Activated B cell treated with CpG ODN at 0.5 μM for 24 hours (primary cell): ENCODE measurements at regions of chr4 and their contacts with region 1.

Region 1: DNA sequence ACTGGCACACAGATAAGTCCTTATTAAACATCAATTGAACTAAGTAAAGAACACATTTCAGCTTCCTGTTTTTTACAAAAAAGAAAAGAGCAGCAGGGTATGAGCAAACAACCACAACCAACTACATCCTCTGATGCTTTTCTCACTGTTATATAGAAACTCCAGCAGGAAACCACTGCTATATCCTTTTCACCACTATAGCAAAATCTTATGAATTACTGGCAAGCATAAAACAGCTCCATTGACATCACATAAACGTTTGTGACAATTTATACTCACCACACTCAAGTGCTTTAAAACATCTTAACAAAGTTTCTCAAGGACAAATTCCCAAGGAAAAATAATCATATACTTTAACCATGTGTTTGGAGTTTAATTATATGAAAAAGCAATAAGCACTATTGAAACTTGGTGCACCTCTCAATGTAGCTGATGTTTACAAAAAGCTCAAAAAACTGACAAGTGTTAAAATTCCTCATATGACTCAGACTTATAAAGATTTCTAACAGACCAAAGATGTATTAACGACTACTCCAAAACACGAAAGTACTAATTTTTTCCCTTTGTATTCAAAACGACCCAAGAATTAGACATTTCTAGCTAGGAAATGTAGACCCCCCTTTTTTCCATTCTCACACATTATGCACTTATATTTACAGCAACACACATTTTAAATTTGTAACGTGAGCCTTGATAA is 12.9 kb downstream of the GPRIN3 start:
- DNase-seq: no peak
- ATAC-seq: peak; percentile 33
- H3K4me3 Mint-ChIP-seq: no peak overlapping the region
- H3K27ac Mint-ChIP-seq: no peak overlapping the region
- H3K4me1 Mint-ChIP-seq: peaks cover 64% of the 10 kb centered on the region
- H3K27me3 Mint-ChIP-seq: peaks cover 7% of the 10 kb centered on the region
- CTCF ChIP-seq: no peak

Region 2: GRCh38 chr4:89254847-89255246 is 39.9 kb before region 1 on chr4:
- CTCF ChIA-PET with region 1: interaction called, 3 read pairs
- POLR2A ChIA-PET with region 1: no interaction called
- intact Hi-C with region 1: loop called (anchors 2 kb)
- DNase-seq: no peak
- ATAC-seq: peak; percentile 64
- H3K4me3 Mint-ChIP-seq: no peak overlapping the region
- H3K27ac Mint-ChIP-seq: no peak overlapping the region
- H3K4me1 Mint-ChIP-seq: no peaks in the 10 kb centered on the region
- H3K27me3 Mint-ChIP-seq: no peaks in the 10 kb centered on the region
- CTCF ChIP-seq: peak; percentile 88

Region 3: DNA sequence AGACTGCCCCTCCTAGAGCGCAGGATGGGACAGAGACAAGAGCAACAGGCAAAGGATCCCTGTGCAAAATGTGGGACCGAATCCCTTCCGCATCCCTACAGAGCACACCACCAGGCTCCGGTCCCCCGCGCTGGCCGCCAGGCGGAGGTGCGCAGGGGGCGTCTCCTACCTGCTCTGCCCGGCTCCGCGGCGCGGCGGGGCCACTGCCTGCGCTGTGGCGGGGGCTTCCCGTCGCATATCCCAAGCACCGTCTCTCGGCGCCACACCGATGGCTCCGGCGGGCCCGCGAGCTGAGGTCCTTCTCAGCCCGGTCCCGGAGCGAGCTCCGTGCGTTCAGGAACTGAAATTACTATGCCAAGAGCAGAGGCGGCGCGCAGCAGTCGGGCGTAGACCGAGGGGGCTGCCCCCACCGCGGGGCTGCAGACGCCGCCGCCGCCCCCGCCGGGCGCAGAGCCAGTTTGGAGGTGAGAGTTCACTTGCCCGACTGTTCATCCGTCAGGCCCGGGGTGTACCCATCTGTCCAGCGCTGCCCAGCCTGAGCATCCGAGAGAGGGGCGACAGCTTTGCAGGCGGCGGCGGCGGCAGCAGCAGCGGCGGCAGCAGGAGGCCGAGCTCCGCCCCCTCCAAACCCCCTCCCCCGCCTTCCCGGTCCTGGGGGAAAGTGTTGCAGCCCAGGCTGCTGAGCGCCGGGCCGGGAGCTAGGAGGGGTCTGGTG is 12.9 kb after region 1 on chr4 and contains the start of gene GPRIN3:
- CTCF ChIA-PET with region 1: no interaction called
- POLR2A ChIA-PET with region 1: interaction called, 7 read pairs
- intact Hi-C with region 1: loop called (anchors 1 kb)
- DNase-seq: peak; percentile 59
- ATAC-seq: peak; percentile 93
- H3K4me3 Mint-ChIP-seq: peak within 1 kb of the TSS; percentile 88
- H3K27ac Mint-ChIP-seq: peak within 1 kb of the TSS; percentile 46
- H3K4me1 Mint-ChIP-seq: peaks cover 30% of the 10 kb centered on the region
- H3K27me3 Mint-ChIP-seq: peaks cover 10% of the 10 kb centered on the region
- CTCF ChIP-seq: no peak
- total RNA-seq, gene GPRIN3: 1.8 and 1.9 TPM in 2 replicates

Region 4: DNA sequence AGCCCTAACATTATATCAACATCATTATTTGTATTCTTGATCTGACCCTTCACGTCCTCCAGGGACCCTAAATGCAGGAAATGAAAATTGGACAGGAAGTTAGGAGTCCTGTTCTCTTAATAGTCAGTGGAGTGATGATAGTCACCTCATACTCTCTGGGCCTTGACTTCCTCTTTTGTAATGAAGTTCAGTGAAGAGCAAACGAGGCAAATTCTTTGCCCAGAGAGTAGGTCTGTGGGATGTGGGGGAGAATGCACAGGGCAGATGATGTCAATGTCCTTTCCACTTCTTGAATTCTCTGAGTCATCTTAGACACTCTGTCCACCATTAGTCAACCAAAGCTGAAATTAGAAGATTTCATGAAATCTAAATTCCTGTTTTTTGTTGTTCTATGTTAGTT is 29.9 kb after region 1 on chr4:
- CTCF ChIA-PET with region 1: interaction called, 3 read pairs
- POLR2A ChIA-PET with region 1: no interaction called
- intact Hi-C with region 1: loop called (anchors 1 kb)
- DNase-seq: no peak
- ATAC-seq: peak; percentile 98
- H3K4me3 Mint-ChIP-seq: peak overlapping the region; percentile 12
- H3K27ac Mint-ChIP-seq: peak overlapping the region; percentile 66
- H3K4me1 Mint-ChIP-seq: peaks cover 27% of the 10 kb centered on the region
- H3K27me3 Mint-ChIP-seq: no peaks in the 10 kb centered on the region
- CTCF ChIP-seq: no peak

Region 5: GRCh38 chr4:90127223-90127705 is 832.5 kb after region 1 on chr4 and contains the start of gene CCSER1:
- CTCF ChIA-PET with region 1: no interaction called
- POLR2A ChIA-PET with region 1: no interaction called
- intact Hi-C with region 1: loop called (anchors 10 kb)
- DNase-seq: peak; percentile 78
- ATAC-seq: peak; percentile 89
- H3K4me3 Mint-ChIP-seq: peak within 1 kb of the TSS; percentile 96
- H3K27ac Mint-ChIP-seq: peak within 1 kb of the TSS; percentile 95
- H3K4me1 Mint-ChIP-seq: peaks cover 21% of the 10 kb centered on the region
- H3K27me3 Mint-ChIP-seq: peaks cover 2% of the 10 kb centered on the region
- CTCF ChIP-seq: no peak
- total RNA-seq, gene CCSER1: 14.4 and 20.1 TPM in 2 replicates